ENCODE measurements at regions of chr9 and their contacts with region 1.

Region 1: DNA sequence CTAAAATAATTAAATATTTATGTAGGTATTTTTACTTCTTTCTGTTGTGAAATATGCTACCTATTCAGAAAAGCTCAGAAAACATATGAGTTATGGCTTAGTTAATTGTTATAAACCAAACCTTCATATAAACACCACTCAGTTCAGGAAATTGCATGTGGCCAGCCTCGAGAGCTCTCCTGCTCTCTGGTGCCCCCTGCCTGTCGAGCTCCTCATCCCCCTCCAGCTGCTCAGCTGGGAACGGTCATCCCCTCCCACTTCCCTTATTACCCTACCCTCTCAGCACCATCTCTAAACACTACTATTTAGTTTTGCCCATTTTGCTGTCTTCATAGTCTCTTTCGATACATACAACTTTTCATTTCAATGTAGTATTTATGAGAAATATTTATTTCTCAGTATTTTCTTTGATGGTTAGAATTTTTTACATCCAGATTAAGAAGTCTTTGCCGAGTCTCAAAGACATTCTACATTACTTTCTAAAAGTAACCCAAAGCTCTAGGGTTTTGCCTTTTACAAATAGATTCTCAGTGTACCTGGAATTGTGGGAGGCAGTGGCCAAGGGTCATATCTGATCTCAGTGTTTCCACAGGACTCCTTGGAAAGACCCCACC is 51.2 kb upstream of the SEMA4D start:
- DNase-seq: peak; percentile 54 to 97 (median 83)

Region 2: GRCh38 chr9:89318123-89319014 is 230.8 kb before region 1 on chr9 and contains the start of gene SECISBP2:
- intact Hi-C with region 1: loop called (anchors 2 kb)
- DNase-seq: peak; percentile 90 to 99 (median 94)

Region 3: GRCh38 chr9:89388084-89388867 is 160.9 kb before region 1 on chr9:
- intact Hi-C with region 1: loop called (anchors 5 kb)
- DNase-seq: peak in 1 of 10 donors; percentile 83

Region 4: DNA sequence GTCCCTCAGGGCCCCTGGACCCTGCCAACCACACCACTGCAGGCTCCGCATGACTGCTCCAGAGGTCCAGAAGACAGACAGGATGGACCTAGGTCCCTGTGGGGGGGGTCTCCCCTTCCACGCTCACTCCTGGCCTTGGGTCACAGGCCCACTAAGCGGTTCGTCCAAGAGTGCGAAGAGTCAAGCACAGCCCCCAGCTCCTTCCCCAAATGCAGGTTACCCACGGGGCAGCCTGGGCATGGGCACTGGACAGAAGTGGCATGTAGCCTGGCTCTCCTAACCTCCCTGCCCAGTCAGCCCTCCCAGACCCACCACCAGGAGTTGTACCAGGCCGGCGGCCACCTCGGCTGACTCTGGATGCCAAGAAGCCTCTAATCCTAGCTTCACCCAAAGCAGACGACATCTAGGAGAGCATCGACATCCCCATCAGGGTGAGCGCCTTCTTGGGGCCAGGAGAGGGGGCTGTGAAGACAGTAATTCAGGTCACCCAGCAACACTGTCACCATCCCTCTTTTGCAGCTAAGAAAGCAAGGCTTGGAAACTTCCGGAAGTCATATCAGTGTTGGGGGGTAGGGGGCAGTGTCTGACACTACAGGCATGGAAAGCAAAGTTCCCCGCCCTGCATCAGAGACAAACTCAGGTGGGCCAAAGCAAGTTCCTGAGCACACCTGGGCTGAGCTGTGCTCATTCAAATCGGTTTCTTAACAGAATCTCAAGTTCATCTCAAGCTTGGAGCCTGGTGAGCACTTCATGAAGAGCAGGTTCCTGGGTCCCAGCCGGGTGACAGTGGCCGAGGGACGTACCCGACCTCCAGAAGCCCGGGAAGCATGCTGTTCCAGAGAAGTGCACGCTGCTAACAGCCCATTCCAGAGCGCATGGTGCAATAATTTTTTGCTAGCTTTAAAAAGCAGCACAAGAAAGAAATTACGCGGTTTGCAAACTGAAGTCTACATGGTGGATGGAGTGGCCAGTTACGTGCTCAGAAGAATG is 119.9 kb before region 1 on chr9:
- intact Hi-C with region 1: loop called (anchors 5 kb)
- DNase-seq: peak in 3 of 10 donors; percentile 65 to 74 (median 66)

Region 5: DNA sequence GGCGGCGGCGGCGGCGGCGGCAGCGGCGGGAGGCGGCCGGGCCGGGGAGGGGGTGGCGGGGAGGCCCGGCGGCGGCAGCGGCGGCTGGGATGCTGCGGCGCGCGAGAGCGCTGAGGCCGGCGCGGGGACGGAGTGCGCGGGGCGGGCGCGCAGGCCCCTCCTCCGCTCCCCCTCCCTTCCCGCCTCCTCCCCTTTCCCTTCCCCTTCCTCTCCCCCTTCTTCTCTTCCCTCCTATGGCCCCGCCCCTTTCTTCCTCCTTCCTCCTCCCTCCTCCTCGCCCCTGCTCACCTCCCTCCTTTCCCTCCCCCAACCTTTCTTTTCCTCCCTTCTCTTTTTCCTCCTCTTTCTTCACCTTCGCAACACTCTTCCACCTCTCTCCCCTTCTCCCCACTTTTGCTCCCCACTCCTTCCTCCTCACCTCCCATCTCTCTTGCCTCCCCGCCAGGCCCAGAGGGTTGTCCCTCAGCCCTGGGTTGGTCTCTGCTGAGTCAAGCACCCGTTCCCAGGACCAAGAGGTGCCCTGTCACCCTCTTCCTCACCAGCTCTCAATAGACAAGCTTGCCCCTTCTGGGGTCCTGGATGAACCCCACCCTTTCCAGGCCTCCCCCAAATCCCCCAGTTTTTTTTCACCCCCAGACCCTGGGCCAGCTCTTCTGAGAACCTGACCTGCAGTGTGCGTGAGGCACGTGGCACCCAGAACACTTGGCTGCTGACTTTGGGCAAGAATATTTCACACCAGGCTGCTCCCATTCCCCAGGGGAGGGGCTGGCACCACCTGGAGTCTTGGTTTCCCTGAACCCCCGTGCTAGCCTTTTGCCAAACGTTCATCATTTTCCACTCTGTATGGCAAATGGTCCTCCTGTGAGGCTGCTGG is 50.9 kb before region 1 on chr9 and contains the start of gene SEMA4D:
- intact Hi-C with region 1: loop called (anchors 5 kb)
- DNase-seq: peak; percentile 58 to 95 (median 74)